ENCODE measurements at regions of chr7 and their contacts with region 1.

Region 1: DNA sequence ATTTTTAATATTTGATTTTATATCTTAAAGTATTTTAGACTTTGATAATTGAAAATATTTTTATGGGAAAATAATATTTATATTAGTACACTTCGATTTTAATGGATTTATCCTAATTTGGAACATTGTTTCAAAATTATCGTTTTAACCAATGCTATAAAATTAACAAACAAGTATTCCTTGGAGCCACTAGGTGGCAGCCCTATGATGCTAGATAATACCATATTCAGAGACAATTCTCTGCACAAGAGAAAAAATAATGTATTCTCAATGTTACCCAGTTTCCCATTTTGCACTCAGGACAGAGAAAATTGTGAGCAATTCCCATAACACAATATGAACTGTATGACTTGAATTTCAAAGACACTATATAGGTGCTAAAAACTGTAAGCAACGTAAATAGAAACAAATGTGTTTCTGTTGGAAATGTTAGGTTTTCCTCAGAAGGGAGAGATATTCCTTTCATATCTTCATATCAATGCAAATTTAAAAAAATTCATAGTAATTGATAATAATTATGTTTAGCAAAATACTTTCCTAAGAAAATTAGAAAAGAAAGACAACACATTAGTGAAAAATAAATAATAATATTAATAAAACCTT is 237.8 kb downstream of the SEMA3E start:
- DNase-seq: peak; percentile 25

Region 2: GRCh38 chr7:83339907-83340306 is 71.2 kb before region 1 on chr7:
- in situ Hi-C with region 1: no loop called
- DNase-seq: no peak

Region 3: DNA sequence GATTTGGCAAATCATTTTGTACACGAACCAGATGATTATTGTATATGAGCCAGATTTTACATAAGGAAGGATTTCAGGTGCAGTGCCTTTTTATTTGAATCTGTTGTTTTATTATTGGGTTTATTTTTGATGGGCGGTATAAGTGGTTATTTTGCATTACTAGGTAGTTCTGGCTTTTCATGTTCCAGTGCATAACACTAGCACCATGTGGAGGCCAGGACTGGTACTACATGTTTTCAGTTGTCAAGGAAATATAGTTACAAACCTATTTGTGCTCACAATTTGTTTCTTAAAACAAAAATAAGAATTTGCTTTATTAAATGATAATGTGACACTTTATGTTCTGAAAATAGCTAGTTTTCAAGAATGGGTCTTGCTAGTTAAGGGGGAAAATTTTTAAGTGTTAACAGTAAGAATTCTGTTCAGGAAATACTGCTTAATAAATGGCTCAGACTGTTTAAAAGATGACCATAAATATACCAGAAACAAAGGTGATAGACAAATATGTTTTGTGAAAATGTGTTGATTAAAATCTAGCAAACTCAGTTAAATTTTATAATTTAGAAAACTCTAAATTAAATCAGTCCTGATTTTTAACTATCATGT is 245.0 kb after region 1 on chr7:
- in situ Hi-C with region 1: loop called (anchors 25 kb)
- DNase-seq: peak; percentile 23

Region 4: GRCh38 chr7:83808973-83809372 is 397.9 kb after region 1 on chr7:
- in situ Hi-C with region 1: no loop called
- DNase-seq: no peak